Dorsolateral prefrontal cortex (tissue), 120 donors: ENCODE measurements at regions of chr4 and their contacts with region 1.

Region 1: DNA sequence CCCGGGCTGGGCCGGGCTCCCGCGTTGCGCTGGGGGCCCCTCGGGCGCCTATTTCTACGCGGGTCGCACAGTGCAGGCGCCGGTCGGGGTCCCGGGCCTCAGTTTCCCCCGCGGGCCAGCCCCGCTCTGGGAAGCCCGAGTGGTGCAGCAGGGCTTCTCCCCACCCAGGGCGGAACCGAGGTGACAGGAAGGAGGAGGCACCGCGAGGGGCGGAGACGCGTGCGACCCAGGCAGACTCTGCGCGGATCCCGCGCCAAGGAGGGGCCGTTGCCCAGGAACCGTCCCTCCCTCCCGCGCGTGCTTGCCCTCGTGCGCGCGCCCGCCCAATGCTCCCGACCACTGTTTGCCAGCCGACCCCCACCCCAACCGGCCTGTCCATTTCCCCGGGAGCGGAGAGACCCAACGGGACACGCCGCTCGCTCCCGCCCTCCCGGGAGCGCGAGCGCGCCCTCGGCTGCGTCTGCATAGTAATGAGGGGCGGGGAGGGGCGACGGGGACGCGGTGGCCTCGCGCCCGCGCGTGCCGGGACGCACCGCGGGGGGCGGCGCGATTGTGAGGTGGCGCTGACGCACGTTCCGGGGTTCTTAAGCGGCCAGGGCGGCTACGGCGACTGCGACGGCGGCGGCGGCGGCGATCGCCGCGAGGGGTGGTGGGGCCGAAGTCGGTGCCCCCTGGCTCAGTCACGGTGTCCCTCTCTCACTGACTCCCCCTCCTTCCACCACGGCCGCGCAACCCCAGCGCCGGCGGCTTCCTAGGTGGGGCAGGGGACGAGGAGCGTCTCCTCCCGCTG is at the start of gene CPEB2:
- DNase-seq: peak; percentile 90 to 96 (median 94)
- H3K4me3 ChIP-seq: peak within 1 kb of the TSS; percentile 70 to 100 (median 95)
- H3K27ac ChIP-seq: peak within 1 kb of the TSS; percentile 97 to 100 (median 100)
- H3K27me3 ChIP-seq: no peaks in the 10 kb centered on the region
- CTCF ChIP-seq: peak in 15 of 56 donors; percentile 1 to 24 (median 12)
- total RNA-seq, gene CPEB2: 31.4 to 88.1 (median 53.3) TPM

Region 2: GRCh38 chr4:13627606-13628301 is 1374.3 kb before region 1 on chr4 and contains the start of gene BOD1L1:
- intact Hi-C with region 1: loop called in 1 of 2 experiments (anchors 5 kb)
- DNase-seq: peak; percentile 79 to 94 (median 90)
- H3K4me3 ChIP-seq: peak within 1 kb of the TSS; percentile 64 to 100 (median 94)
- H3K27ac ChIP-seq: peak within 1 kb of the TSS; percentile 52 to 99 (median 94)
- H3K27me3 ChIP-seq: no peaks in the 10 kb centered on the region
- CTCF ChIP-seq: peak; percentile 48 to 87 (median 72)
- total RNA-seq, gene BOD1L1: 36.2 to 63.5 (median 52.2) TPM

Region 3: DNA sequence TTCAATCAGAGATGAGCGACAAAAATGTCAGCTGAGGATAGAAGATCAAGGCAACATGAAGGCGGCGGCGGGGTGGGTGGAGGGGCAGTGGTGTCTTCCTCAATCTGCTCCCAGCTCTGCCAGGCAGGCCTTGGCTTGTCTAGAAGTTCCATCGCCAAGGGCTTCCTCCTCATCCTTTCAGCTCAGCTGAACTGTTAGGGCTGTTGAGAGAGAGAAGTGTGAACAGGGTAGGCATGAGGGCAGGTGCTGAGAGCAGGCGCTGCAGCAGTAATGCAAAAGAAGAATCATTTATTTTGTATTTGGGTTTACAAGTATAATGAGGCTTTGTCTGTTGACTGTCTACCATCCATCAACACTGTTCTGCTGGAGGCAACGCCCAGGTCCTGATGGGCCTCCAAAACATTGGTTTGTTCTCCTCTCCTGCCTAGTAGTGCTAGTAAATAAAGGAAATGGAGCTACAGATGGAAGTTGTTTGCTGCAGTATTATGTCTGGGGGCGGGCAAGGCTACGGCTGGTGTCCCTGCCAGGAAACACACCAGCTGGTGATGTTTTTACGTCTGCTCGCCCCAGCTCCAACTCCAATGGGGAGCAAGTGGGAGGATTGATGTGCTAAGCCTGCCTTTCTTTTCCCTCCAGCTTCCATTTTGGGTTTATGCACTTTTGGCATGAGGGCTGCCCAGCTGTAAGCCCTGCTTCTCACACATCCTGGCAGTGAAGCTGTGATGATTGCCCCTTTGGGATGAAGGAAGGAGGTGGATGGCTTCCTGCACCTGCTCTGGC is 1235.1 kb before region 1 on chr4:
- intact Hi-C with region 1: loop called in 1 of 2 experiments (anchors 5 kb)
- DNase-seq: peak in 6 of 10 donors; percentile 17 to 69 (median 62)
- H3K4me3 ChIP-seq: no peak overlapping the region
- H3K27ac ChIP-seq: peak overlapping the region in 1 of 59 donors; percentile 36
- H3K27me3 ChIP-seq: no peaks in the 10 kb centered on the region
- CTCF ChIP-seq: no peak

Region 4: DNA sequence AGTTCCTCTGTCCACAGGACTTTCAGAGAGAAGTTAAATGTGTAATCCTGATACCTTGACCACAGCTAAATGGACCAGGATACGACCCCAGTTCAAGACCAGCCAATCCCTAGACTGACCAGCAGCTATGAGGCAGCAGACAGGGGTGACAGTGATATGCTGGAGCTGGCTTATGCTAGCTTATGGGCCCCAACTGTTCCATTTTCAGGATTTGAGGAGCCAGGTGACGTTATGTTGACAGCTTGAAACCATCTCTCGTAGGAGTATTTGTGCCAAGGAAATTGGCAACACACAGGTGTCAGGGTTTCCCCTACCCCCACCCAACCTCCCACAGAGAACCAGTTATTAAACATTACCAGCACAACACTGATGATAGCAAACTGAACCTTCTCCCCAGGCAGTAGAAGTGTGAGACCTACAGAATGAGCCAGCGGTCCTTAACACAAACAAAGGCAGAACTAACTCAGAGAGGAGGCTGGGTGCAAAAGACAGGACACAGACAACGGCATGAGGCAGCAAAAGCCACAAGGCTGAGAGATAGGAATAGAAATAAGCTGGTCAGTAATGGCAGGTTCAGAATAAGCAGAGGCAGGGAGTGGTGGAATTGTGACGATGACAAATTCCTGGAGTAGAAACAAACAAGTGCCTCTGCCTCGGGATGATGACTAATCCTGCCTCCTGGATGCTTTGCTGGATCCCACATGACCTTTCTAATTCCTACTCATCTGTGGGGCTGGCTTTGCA is 85.3 kb before region 1 on chr4:
- intact Hi-C with region 1: loop called in 1 of 2 experiments (anchors 5 kb)
- DNase-seq: peak in 2 of 10 donors; percentile 4 to 50
- H3K4me3 ChIP-seq: no peak overlapping the region
- H3K27ac ChIP-seq: peak overlapping the region in 30 of 59 donors; percentile 5 to 83 (median 42)
- H3K27me3 ChIP-seq: no peaks in the 10 kb centered on the region
- CTCF ChIP-seq: no peak

Region 5: DNA sequence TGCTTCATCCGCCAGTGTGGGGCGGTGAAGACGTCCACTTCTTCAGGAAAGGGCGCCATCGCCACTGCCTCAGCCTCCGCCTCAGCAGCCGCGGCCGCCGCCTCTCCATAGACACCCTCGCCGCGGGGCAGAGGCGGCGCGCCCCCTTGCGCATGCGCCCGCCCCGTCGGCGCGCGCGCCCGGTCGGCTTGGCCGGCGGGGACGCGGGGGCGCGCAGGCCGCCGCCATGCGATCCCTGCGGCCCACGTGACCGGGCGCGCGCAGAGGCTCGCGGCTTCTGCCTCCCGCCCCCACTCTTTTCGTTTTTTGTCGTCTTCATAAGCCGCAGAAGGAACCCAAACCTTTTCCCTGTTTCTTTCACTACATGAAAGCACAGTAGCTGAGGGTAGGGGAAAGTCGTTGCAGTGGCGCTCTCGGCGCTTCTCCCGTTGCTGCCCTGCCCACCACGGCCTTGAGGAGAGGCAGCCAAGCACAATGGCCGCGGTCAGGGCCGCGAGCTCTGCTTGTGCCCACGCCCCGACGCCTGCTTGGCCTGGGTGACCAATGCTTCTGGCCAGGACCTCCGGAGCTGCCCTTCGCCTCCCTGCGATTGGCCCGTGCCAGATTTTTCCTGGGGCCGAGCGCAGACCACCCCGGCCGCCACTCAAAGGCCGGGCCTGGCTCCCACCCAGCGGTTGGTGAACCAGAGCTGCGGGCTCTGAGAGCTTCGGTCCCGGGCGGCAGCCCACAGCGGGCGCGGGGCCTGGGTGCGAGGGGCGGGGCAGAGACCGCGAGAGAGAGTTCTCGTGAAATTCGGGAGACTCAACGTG is 653.4 kb after region 1 on chr4 and contains the start of gene FBXL5:
- intact Hi-C with region 1: loop called (anchors 2 to 10 kb)
- DNase-seq: peak; percentile 60 to 84 (median 68)
- H3K4me3 ChIP-seq: peak within 1 kb of the TSS; percentile 64 to 90 (median 80)
- H3K27ac ChIP-seq: peak within 1 kb of the TSS; percentile 98 to 100 (median 100)
- H3K27me3 ChIP-seq: no peaks in the 10 kb centered on the region
- CTCF ChIP-seq: peak in 7 of 56 donors; percentile 3 to 34 (median 11)
- total RNA-seq, gene FBXL5: 72.7 to 124 (median 93.8) TPM